Psoas muscle (tissue), 8 donors: ENCODE measurements at regions of chr11 and their contacts with region 1.

Region 1: GRCh38 chr11:67118801-67119584 is at the start of gene KDM2A:
- DNase-seq: peak; percentile 99 to 100
- ATAC-seq: peak; percentile 89 to 94 (median 92)
- H3K4me3 ChIP-seq: peak within 1 kb of the TSS; percentile 99
- H3K27ac ChIP-seq: peak within 1 kb of the TSS; percentile 99
- H3K4me1 ChIP-seq: peaks cover 33% of the 10 kb centered on the region
- H3K27me3 ChIP-seq: no peaks in the 10 kb centered on the region
- CTCF ChIP-seq: peak; percentile 16
- total RNA-seq, gene KDM2A: 51.1 to 61.4 (median 54.5) TPM

Region 2: DNA sequence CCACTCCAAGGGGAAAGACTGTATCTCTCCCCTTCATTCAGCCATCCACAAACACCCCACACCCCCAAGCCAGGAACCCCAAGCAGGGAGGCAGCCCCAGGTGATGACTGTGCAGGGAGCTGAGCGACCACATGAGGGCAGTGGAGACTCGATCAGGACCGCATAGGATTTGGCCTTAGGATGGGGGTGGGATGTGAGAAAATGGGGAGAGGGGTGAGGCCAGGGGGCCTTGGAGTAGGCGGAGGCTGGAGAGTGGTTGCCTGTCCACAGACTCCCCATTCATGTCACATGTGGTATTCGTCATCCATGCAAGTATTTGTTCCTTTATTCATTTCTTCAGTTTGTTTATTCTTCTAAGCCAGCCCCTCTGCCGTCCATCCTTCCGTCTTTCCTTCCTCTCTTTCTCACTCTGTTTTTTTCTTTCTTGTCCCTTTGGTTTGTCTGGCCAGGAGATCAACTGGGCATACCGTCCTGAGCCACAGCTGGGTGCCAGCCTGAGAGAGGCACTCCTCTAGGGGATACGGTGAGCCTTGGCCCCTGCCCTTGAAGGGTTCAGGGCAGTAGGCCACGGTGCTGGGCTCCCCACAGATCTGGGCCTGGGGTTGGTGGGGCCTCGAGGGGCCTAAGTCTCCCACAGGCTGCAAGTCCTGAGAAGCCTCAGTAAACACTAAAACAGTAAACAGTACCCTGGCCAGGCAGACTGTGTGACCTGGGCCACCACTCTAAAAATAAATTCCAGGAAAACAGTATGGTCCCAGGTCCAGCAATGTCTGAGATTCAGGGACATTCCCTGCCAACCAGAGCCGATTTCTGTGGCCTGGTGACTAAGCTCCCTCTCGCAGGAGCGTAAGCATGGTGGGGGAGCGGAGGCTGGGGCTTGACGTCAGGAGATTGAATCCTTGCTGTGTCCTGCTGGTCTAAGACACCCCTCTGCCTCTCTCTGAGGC is 64.8 kb before region 1 on chr11:
- intact Hi-C with region 1: loop called in 1 of 2 experiments (anchors 5 kb)
- DNase-seq: peak; percentile 49 to 66
- ATAC-seq: peak; percentile 55 to 74 (median 60)
- H3K4me3 ChIP-seq: no peak overlapping the region
- H3K27ac ChIP-seq: peak overlapping the region; percentile 87
- H3K4me1 ChIP-seq: peaks cover 27% of the 10 kb centered on the region
- H3K27me3 ChIP-seq: no peaks in the 10 kb centered on the region
- CTCF ChIP-seq: peak; percentile 61

Region 3: DNA sequence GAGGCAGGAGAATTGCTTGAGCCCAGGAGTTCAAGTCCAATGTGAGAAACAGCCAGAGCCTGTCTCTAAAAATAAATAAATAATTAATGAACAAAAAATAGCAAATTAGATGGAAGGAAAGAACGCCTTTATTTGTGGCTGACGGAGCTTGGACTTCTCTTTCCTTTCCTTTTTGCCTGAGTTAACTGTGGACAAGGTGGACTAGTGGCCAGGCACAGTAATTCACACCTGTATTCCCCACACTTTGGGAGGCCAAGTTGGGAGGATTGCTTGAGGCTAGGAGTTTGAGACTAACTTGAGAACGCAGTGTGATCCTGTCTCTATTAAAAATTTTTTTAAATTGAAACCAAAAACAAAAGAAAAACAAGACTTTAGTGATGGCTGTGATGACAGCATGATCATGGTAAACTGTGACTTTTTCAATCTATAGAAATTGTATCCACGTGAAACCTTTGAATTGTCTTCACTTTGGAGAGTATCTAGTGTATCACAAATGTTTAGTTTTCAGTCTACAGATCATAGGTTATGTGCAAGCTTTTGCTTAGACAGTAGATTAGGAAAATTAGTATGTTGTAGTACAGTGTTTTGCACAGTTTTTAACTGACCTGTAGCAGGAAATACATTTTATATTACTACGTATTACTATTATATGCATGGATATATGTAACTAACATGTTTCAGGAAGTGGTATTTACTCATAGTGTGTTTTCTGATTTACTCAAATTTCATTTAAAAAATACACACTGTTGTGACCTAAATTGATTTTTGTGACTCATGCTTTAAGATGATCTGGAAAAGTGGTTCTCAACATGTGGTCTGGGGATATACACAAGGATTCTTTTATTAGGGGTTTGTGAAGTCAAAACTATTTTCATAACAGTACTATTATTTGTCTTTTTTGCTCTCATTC is 42.1 kb after region 1 on chr11:
- intact Hi-C with region 1: loop called (anchors 5 kb)
- DNase-seq: no peak
- ATAC-seq: no peak
- H3K4me3 ChIP-seq: no peak overlapping the region
- H3K27ac ChIP-seq: no peak overlapping the region
- H3K4me1 ChIP-seq: peaks cover 37% of the 10 kb centered on the region
- H3K27me3 ChIP-seq: no peaks in the 10 kb centered on the region
- CTCF ChIP-seq: no peak

Region 4: DNA sequence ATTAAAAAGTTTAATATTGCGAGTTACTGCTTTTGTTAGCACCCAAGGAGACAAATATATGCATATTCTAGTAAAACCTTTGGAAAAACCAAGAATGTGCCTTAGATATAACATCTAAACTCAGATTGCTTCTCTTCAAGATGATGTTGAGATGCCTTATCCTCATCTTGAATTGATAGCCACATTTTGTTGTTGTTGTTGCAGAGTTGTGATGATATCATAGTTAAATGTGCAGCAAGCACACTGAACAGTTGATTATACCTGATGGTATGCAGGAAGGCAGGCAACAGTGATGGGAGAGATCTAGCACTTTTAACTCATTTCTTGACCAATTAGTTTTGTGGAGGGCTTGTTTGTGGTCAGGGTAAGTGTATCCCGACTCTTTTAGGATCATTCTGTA is 48.1 kb after region 1 on chr11:
- intact Hi-C with region 1: loop called (anchors 5 kb)
- DNase-seq: no peak
- ATAC-seq: no peak
- H3K4me3 ChIP-seq: no peak overlapping the region
- H3K27ac ChIP-seq: peak overlapping the region; percentile 72
- H3K4me1 ChIP-seq: peaks cover 42% of the 10 kb centered on the region
- H3K27me3 ChIP-seq: no peaks in the 10 kb centered on the region
- CTCF ChIP-seq: no peak

Region 5: GRCh38 chr11:67239783-67240575 is 121.0 kb after region 1 on chr11:
- intact Hi-C with region 1: loop called in 1 of 2 experiments (anchors 5 kb)
- DNase-seq: peak; percentile 96 to 98
- ATAC-seq: peak; percentile 96 to 97 (median 96)
- H3K4me3 ChIP-seq: peak overlapping the region; percentile 71
- H3K27ac ChIP-seq: peak overlapping the region; percentile 91
- H3K4me1 ChIP-seq: peaks cover 50% of the 10 kb centered on the region
- H3K27me3 ChIP-seq: no peaks in the 10 kb centered on the region
- CTCF ChIP-seq: no peak